ENCODE measurements at regions of chr16 and their contacts with region 1.

Region 1: GRCh38 chr16:81444448-81445121 is at the start of gene CMIP:
- DNase-seq: peak; percentile 66 to 92 (median 80)
- ATAC-seq: peak; percentile 64
- H3K4me3 ChIP-seq: peak within 1 kb of the TSS; percentile 67 to 75
- H3K4me3 Mint-ChIP-seq: peak within 1 kb of the TSS; percentile 91
- H3K27ac ChIP-seq: peak within 1 kb of the TSS; percentile 37 to 78
- H3K27ac Mint-ChIP-seq: peak within 1 kb of the TSS; percentile 93
- H3K4me1 ChIP-seq: peaks cover 50% of the 10 kb centered on the region
- H3K4me1 Mint-ChIP-seq: peaks cover 50% of the 10 kb centered on the region
- H3K27me3 ChIP-seq: no peaks in the 10 kb centered on the region
- H3K27me3 Mint-ChIP-seq: no peaks in the 10 kb centered on the region
- CTCF ChIP-seq: no peak
- total RNA-seq, gene CMIP: 40.9 to 42.1 TPM

Region 2: DNA sequence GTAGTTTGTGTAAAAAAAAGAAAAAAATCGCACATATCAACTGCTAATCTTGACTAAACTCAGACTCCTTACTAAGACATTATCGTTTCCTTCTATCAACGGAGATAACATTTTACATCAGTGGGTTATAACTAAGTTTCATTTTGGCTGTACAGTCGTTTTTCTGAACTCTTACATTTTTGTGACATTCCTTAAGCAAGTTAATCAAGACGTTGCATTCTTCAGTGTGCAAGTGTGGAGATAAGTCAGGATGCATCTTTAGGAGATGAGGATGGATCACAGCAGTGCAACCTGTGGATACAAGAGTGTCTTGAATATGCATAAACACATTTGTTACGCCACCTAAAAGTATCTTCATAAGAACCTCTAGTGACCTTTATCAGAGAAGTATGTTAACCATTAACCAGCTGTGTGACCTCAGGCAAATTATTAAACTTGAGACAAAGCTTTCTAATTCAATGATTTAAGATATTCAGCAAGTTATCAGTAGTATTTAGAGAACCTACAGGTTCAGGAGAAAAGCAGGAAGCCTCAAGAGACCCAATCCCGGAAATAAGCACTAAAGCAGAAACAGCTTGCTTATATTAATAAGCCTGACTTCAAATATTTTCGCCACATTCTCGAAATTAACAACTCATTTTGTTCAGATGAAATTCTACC is 447.3 kb before region 1 on chr16:
- CTCF ChIA-PET with region 1: no interaction called
- POLR2A ChIA-PET with region 1: no interaction called
- intact Hi-C with region 1: loop called in 1 of 2 experiments (anchors 5 kb)
- DNase-seq: peak in 1 of 9 experiments; percentile 44
- ATAC-seq: peak; percentile 48
- H3K4me3 ChIP-seq: peak overlapping the region; percentile 47 to 54
- H3K4me3 Mint-ChIP-seq: peak overlapping the region; percentile 86
- H3K27ac ChIP-seq: peak overlapping the region; percentile 58 to 61
- H3K27ac Mint-ChIP-seq: peak overlapping the region; percentile 91
- H3K4me1 ChIP-seq: peaks cover 9% of the 10 kb centered on the region
- H3K4me1 Mint-ChIP-seq: peaks cover 64% of the 10 kb centered on the region
- H3K27me3 ChIP-seq: no peaks in the 10 kb centered on the region
- H3K27me3 Mint-ChIP-seq: no peaks in the 10 kb centered on the region
- CTCF ChIP-seq: no peak

Region 3: DNA sequence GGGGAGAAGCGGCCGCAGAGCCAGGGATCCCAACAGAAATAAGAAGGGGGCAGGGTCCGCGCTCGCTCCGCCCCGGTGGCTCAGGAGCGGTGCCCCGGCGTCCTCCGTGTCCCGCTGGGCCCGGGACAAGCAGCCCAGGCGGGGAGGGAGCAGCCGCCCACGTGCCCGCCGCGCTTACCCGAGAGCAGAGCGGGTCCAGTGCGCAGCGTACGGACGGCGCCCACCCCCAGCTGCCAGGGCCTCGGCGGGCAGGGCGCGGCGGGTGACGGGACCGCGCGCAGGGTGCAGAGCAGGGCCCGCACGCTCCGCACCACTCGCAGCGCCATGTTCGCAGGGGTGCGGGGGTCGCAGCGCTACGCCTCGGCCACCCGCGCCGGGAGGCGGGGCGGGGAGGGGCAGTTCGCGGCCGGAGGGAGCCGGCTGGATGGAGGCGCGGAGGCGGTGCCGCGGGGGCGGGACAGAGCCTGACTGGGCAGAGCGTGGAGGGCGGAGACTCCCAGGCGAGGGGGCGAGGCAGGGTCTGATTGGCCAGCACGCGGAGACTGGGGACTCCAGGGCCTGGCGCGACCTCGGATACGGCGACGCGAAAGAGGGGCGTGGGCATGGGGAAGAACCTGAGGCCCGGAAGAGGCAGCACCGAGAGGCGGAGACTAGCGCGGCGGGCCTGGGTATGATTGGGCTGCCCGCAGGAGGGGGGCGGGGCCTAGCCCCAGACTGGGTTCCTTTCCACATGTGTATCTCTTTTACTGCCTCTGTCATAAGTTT is 348.4 kb before region 1 on chr16 and contains the start of gene GCSH:
- CTCF ChIA-PET with region 1: no interaction called
- POLR2A ChIA-PET with region 1: no interaction called
- intact Hi-C with region 1: loop called in 1 of 2 experiments (anchors 2 kb)
- DNase-seq: peak; percentile 94 to 100 (median 98)
- ATAC-seq: peak; percentile 97
- H3K4me3 ChIP-seq: peak within 1 kb of the TSS; percentile 59 to 71
- H3K4me3 Mint-ChIP-seq: peak within 1 kb of the TSS; percentile 88
- H3K27ac ChIP-seq: peak within 1 kb of the TSS; percentile 43 to 58
- H3K27ac Mint-ChIP-seq: peak within 1 kb of the TSS; percentile 49
- H3K4me1 ChIP-seq: peaks cover 7% of the 10 kb centered on the region
- H3K4me1 Mint-ChIP-seq: peaks cover 14% of the 10 kb centered on the region
- H3K27me3 ChIP-seq: no peaks in the 10 kb centered on the region
- H3K27me3 Mint-ChIP-seq: no peaks in the 10 kb centered on the region
- CTCF ChIP-seq: no peak
- total RNA-seq, gene GCSH: 2.5 to 2.8 TPM

Region 4: DNA sequence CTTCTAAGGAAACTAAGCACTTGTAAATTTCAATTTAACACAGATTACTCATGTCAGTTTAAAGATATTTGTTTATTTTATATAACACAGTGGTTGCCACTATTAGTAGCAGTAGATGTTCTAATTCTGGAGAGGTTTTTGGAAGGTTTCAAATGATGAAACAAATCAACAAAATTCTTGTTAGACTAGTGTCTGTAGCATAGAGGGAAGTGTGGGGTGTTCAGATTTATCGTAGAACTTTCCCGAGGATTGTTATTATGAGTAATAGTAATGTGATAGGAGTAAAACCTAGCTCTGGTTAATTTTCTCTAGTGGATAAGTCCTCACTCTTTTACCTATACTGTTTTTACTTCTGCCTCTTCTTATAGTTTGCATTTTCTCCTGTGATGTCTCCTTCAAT is 123.5 kb before region 1 on chr16:
- CTCF ChIA-PET with region 1: no interaction called
- POLR2A ChIA-PET with region 1: no interaction called
- intact Hi-C with region 1: loop called in 1 of 2 experiments (anchors 2 kb)
- DNase-seq: no peak
- ATAC-seq: no peak
- H3K4me3 ChIP-seq: no peak overlapping the region
- H3K4me3 Mint-ChIP-seq: no peak overlapping the region
- H3K27ac ChIP-seq: no peak overlapping the region
- H3K27ac Mint-ChIP-seq: no peak overlapping the region
- H3K4me1 ChIP-seq: peaks cover 1% of the 10 kb centered on the region
- H3K4me1 Mint-ChIP-seq: peaks cover 31% of the 10 kb centered on the region
- H3K27me3 ChIP-seq: no peaks in the 10 kb centered on the region
- H3K27me3 Mint-ChIP-seq: no peaks in the 10 kb centered on the region
- CTCF ChIP-seq: no peak

Region 5: GRCh38 chr16:81376880-81377279 is 67.7 kb before region 1 on chr16:
- CTCF ChIA-PET with region 1: no interaction called
- POLR2A ChIA-PET with region 1: no interaction called
- intact Hi-C with region 1: no loop called
- DNase-seq: peak in 2 of 9 experiments; percentile 3 to 16
- ATAC-seq: no peak
- H3K4me3 ChIP-seq: no peak overlapping the region
- H3K4me3 Mint-ChIP-seq: no peak overlapping the region
- H3K27ac ChIP-seq: no peak overlapping the region
- H3K27ac Mint-ChIP-seq: no peak overlapping the region
- H3K4me1 ChIP-seq: no peaks in the 10 kb centered on the region
- H3K4me1 Mint-ChIP-seq: peaks cover 8% of the 10 kb centered on the region
- H3K27me3 ChIP-seq: no peaks in the 10 kb centered on the region
- H3K27me3 Mint-ChIP-seq: no peaks in the 10 kb centered on the region
- CTCF ChIP-seq: no peak

Region 6: GRCh38 chr16:81521151-81521626 is 76.6 kb after region 1 on chr16:
- CTCF ChIA-PET with region 1: no interaction called
- POLR2A ChIA-PET with region 1: no interaction called
- intact Hi-C with region 1: loop called (anchors 1 to 5 kb)
- DNase-seq: peak; percentile 74 to 97 (median 87)
- ATAC-seq: peak; percentile 46
- H3K4me3 ChIP-seq: peak overlapping the region in 1 of 2 experiments; percentile 13
- H3K4me3 Mint-ChIP-seq: peak overlapping the region; percentile 3
- H3K27ac ChIP-seq: peak overlapping the region; percentile 54 to 95
- H3K27ac Mint-ChIP-seq: peak overlapping the region; percentile 96
- H3K4me1 ChIP-seq: peaks cover 35% of the 10 kb centered on the region
- H3K4me1 Mint-ChIP-seq: peaks cover 52% of the 10 kb centered on the region
- H3K27me3 ChIP-seq: no peaks in the 10 kb centered on the region
- H3K27me3 Mint-ChIP-seq: no peaks in the 10 kb centered on the region
- CTCF ChIP-seq: no peak

Region 7: DNA sequence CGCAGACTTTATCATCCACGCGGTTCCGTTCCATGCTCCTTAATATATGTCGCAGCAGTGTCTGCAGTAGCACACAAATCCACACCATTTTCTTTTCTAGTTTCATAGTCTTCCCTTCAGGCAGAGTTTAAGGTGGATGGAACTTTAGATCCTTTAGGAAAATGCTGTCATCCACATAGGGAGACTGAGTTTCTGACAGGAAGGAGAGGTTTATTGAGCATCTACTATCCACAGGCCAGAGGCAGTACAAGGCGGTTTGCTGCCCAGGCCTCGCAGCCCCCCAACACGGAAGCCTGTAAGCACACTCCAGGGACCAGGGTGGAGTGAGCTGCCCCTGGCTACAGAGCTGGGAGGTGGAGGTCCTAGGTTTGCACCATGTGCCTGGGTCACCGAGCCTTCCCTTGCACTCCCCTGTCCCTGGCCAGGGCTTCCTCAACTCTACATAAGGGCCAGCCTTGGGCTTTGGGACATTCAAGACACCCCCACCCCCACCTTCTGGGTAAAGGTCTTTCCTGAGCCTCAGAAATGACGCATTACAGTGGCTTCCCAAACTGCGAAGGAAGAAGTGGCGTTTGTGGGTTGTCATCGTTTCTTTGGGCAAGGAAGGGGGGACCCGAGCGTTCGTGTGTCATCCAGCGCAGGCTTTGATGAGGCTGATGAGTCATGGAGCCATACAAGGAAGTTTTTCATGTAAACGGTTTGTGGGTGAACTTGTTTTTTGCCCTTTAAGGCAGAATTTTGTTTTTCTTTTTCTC is 188.0 kb after region 1 on chr16:
- CTCF ChIA-PET with region 1: no interaction called
- POLR2A ChIA-PET with region 1: no interaction called
- intact Hi-C with region 1: loop called in 1 of 2 experiments (anchors 2 kb)
- DNase-seq: peak; percentile 60 to 95 (median 81)
- ATAC-seq: peak; percentile 84
- H3K4me3 ChIP-seq: no peak overlapping the region
- H3K4me3 Mint-ChIP-seq: peak overlapping the region; percentile 65
- H3K27ac ChIP-seq: peak overlapping the region; percentile 39 to 77
- H3K27ac Mint-ChIP-seq: peak overlapping the region; percentile 96
- H3K4me1 ChIP-seq: peaks cover 27% of the 10 kb centered on the region
- H3K4me1 Mint-ChIP-seq: peaks cover 55% of the 10 kb centered on the region
- H3K27me3 ChIP-seq: no peaks in the 10 kb centered on the region
- H3K27me3 Mint-ChIP-seq: no peaks in the 10 kb centered on the region
- CTCF ChIP-seq: no peak